CD4-positive, alpha-beta T cell (primary cell): ENCODE measurements at regions of chr7 and their contacts with region 1.

Region 1: DNA sequence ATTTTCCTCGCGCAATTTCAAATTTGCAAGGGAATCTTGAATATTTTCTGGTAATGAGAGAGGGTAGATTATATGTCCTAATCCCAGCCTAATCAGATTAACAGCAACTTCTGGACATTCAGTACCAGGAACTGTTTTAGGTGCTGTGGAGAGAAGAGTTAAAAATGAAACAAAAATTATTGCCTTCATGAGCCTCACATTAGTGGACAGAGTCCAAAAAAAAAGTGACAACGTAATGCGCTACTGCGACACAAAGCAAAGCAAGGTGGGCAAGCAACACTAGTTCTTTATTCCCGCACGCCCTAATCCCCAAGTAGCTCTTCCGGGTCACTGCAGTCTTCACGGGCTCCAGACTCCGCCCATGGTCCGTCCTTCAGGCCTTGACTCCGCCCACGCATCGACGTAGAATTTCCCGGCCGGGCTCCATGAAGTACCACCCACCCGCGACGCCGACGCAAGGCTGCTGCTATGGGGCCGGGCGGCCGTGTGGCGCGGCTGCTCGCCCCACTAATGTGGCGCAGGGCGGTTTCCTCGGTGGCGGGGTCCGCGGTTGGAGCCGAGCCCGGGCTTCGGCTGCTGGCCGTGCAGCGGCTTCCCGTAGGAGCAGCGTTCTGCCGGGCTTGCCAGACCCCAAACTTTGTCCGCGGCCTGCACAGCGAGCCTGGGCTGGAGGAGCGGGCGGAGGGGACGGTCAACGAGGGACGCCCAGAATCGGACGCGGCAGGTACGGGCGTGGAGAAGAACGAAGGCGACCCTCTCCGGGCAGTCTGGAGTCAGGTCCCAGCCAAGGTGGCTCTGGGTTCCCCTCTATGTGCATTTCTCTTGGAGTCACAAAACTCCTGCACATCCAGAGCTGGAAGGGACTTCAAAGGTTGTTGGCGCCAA is at the start of gene MALSU1:
- DNase-seq: peak; percentile 89 to 99 (median 96)
- ATAC-seq: peak; percentile 99
- H3K4me3 ChIP-seq: peak within 1 kb of the TSS; percentile 93
- H3K4me3 Mint-ChIP-seq: peak within 1 kb of the TSS; percentile 90
- H3K27ac ChIP-seq: peak within 1 kb of the TSS; percentile 74 to 78
- H3K27ac Mint-ChIP-seq: peak within 1 kb of the TSS; percentile 95
- H3K4me1 ChIP-seq: peaks cover 35% of the 10 kb centered on the region
- H3K4me1 Mint-ChIP-seq: peaks cover 55% of the 10 kb centered on the region
- H3K27me3 ChIP-seq: no peaks in the 10 kb centered on the region
- H3K27me3 Mint-ChIP-seq: no peaks in the 10 kb centered on the region
- CTCF ChIP-seq: no peak
- total RNA-seq, gene MALSU1: 50.5 to 50.9 TPM

Region 2: DNA sequence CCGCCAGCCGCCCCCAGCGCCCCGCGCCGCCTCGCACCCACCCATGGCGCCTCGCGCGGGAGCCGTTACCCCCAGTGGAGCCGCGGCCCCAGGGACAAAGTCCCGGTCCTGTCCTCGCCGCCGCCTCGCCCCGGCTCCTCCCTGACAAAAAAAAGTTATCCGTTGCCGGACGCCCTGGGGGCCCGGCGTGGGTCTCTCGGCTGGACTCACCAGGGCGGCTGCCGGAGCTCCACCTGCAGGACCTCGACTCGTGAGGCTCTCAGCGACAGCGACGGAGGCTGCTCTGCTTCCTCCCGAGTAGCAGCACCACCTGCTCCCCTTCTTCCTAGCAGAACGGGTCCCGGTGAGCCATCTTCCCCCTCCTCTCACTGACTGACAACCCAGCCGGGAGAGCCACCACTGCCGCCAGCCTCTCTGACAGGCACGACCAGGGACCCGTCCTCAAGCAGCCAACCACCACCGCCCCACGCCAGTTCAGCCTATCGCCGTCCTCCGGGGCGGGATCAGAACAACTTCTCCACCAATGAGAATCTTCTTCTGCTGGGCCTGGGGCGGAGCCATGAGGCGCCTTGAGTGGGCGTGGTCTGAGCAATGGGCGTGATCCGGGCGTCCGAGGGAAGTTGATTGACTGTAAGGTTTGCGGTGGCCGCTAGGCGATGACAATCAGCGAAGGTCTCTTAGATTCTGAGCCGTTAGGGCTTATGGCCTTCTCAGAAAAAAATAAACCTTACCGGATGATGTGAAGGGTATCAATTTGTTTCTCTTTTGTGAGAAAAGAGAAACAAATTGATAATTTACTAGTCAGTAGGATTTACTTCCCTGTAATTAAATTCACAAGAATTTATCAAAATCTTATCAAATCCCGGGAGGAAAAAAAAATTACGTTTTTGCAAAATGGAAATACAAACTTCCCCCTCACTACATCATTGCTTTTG is 285.1 kb before region 1 on chr7 and contains the start of gene HYCC1:
- CTCF ChIA-PET with region 1: no interaction called
- POLR2A ChIA-PET with region 1: interaction called, 4 read pairs
- intact Hi-C with region 1: loop called in 1 of 2 experiments (anchors 5 kb)
- DNase-seq: peak; percentile 97 to 99 (median 98)
- ATAC-seq: peak; percentile 96
- H3K4me3 ChIP-seq: peak within 1 kb of the TSS; percentile 87
- H3K4me3 Mint-ChIP-seq: peak within 1 kb of the TSS; percentile 99
- H3K27ac ChIP-seq: peak within 1 kb of the TSS; percentile 31 to 44
- H3K27ac Mint-ChIP-seq: peak within 1 kb of the TSS; percentile 83
- H3K4me1 ChIP-seq: peaks cover 19% of the 10 kb centered on the region
- H3K4me1 Mint-ChIP-seq: peaks cover 24% of the 10 kb centered on the region
- H3K27me3 ChIP-seq: no peaks in the 10 kb centered on the region
- H3K27me3 Mint-ChIP-seq: no peaks in the 10 kb centered on the region
- CTCF ChIP-seq: peak; percentile 65
- total RNA-seq, gene HYCC1: 12.4 to 13.1 TPM

Region 3: GRCh38 chr7:23072048-23072447 is 227.1 kb before region 1 on chr7:
- CTCF ChIA-PET with region 1: no interaction called
- POLR2A ChIA-PET with region 1: no interaction called
- intact Hi-C with region 1: no loop called
- DNase-seq: no peak
- ATAC-seq: no peak
- H3K4me3 ChIP-seq: no peak overlapping the region
- H3K4me3 Mint-ChIP-seq: no peak overlapping the region
- H3K27ac ChIP-seq: no peak overlapping the region
- H3K27ac Mint-ChIP-seq: no peak overlapping the region
- H3K4me1 ChIP-seq: no peaks in the 10 kb centered on the region
- H3K4me1 Mint-ChIP-seq: no peaks in the 10 kb centered on the region
- H3K27me3 ChIP-seq: no peaks in the 10 kb centered on the region
- H3K27me3 Mint-ChIP-seq: peaks cover 4% of the 10 kb centered on the region
- CTCF ChIP-seq: no peak

Region 4: DNA sequence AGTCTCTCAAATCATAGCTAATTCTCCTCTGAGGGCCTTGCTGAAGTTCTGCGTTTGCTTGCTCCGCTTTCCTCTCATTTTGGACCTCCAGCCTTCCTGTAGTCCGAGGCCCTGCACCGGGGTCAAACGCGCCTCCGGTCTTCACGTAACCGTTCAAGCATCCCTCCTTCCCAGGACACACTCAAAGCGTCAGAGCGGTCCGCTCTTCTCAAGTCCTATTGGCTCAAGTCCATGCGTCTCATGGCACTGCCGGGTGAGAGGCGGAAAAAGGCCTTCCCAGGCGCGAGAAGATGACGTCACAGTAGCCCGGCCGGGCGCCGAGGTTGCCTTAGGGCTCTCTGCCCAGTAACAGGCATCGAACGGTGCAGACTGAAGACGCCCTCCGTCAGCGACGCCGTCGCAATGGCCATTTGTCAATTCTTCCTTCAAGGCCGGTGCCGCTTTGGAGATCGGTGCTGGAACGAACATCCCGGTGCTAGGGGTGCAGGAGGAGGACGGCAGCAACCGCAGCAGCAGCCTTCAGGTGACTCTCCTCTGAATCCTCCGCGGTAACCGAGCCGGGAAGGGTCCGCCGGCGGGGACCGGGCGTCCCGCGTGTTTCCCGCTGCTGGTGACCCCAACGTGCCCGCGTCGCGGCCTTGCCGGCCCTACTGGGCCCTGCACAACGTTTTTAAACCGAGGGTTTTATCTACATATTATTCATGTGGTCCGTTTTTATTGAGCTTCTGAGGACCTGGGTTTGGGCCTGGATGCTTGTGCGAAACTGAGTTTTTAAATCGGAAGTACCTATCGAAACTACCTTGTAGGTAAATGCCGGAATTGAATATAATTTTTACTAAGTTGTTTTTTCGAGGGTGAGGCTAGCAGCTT is 117.2 kb before region 1 on chr7 and contains the start of gene NUP42:
- CTCF ChIA-PET with region 1: interaction called, 3 read pairs
- POLR2A ChIA-PET with region 1: interaction called, 4 read pairs
- intact Hi-C with region 1: loop called in 1 of 2 experiments (anchors 2 kb)
- DNase-seq: peak; percentile 87 to 98 (median 92)
- ATAC-seq: peak; percentile 91
- H3K4me3 ChIP-seq: peak within 1 kb of the TSS; percentile 88
- H3K4me3 Mint-ChIP-seq: peak within 1 kb of the TSS; percentile 96
- H3K27ac ChIP-seq: peak within 1 kb of the TSS; percentile 71 to 81
- H3K27ac Mint-ChIP-seq: peak within 1 kb of the TSS; percentile 97
- H3K4me1 ChIP-seq: peaks cover 18% of the 10 kb centered on the region
- H3K4me1 Mint-ChIP-seq: peaks cover 29% of the 10 kb centered on the region
- H3K27me3 ChIP-seq: no peaks in the 10 kb centered on the region
- H3K27me3 Mint-ChIP-seq: no peaks in the 10 kb centered on the region
- CTCF ChIP-seq: no peak
- total RNA-seq, gene NUP42: 19.4 to 20.1 TPM

Region 5: DNA sequence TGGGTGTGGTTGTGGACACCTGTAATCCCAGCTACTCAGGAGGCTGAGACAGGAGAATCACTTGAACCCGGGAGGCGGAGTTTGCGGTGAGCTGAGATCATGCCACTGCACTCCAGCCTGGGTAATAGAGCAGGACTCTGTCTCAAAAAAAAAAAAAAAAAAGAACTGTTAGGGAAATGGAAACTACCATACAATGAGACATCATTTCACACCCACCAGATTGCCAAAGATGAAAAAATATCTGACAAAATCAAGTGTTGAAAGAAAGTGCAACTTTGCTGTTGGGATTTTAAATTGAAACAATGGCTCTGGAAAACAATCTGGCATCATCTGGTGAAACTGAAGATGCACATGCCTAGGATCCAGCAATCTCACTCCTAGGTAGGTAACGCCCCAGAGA is 16.0 kb before region 1 on chr7:
- CTCF ChIA-PET with region 1: no interaction called
- POLR2A ChIA-PET with region 1: no interaction called
- intact Hi-C with region 1: no loop called
- DNase-seq: no peak
- ATAC-seq: no peak
- H3K4me3 ChIP-seq: no peak overlapping the region
- H3K4me3 Mint-ChIP-seq: no peak overlapping the region
- H3K27ac ChIP-seq: no peak overlapping the region
- H3K27ac Mint-ChIP-seq: no peak overlapping the region
- H3K4me1 ChIP-seq: peaks cover 4% of the 10 kb centered on the region
- H3K4me1 Mint-ChIP-seq: peaks cover 7% of the 10 kb centered on the region
- H3K27me3 ChIP-seq: no peaks in the 10 kb centered on the region
- H3K27me3 Mint-ChIP-seq: no peaks in the 10 kb centered on the region
- CTCF ChIP-seq: no peak

Region 6: GRCh38 chr7:23346316-23346715 is 47.2 kb after region 1 on chr7:
- CTCF ChIA-PET with region 1: no interaction called
- POLR2A ChIA-PET with region 1: interaction called, 13 read pairs
- intact Hi-C with region 1: no loop called
- DNase-seq: peak in 3 of 14 experiments; percentile 45 to 66 (median 51)
- ATAC-seq: peak; percentile 69
- H3K4me3 ChIP-seq: peak overlapping the region; percentile 48
- H3K4me3 Mint-ChIP-seq: peak overlapping the region; percentile 82
- H3K27ac ChIP-seq: no peak overlapping the region
- H3K27ac Mint-ChIP-seq: peak overlapping the region; percentile 73
- H3K4me1 ChIP-seq: peaks cover 2% of the 10 kb centered on the region
- H3K4me1 Mint-ChIP-seq: peaks cover 29% of the 10 kb centered on the region
- H3K27me3 ChIP-seq: no peaks in the 10 kb centered on the region
- H3K27me3 Mint-ChIP-seq: no peaks in the 10 kb centered on the region
- CTCF ChIP-seq: no peak

Region 7: GRCh38 chr7:23531794-23532489 is 232.8 kb after region 1 on chr7 and contains the start of gene TRA2A:
- CTCF ChIA-PET with region 1: no interaction called
- POLR2A ChIA-PET with region 1: no interaction called
- intact Hi-C with region 1: loop called (anchors 5 kb)
- DNase-seq: peak; percentile 92 to 99 (median 97)
- ATAC-seq: peak; percentile 91
- H3K4me3 ChIP-seq: peak within 1 kb of the TSS; percentile 97
- H3K4me3 Mint-ChIP-seq: peak within 1 kb of the TSS; percentile 94
- H3K27ac ChIP-seq: peak within 1 kb of the TSS; percentile 95 to 98
- H3K27ac Mint-ChIP-seq: peak within 1 kb of the TSS; percentile 97
- H3K4me1 ChIP-seq: peaks cover 29% of the 10 kb centered on the region
- H3K4me1 Mint-ChIP-seq: peaks cover 49% of the 10 kb centered on the region
- H3K27me3 ChIP-seq: no peaks in the 10 kb centered on the region
- H3K27me3 Mint-ChIP-seq: no peaks in the 10 kb centered on the region
- CTCF ChIP-seq: no peak
- total RNA-seq, gene TRA2A: 246 to 275 TPM

Region 8: DNA sequence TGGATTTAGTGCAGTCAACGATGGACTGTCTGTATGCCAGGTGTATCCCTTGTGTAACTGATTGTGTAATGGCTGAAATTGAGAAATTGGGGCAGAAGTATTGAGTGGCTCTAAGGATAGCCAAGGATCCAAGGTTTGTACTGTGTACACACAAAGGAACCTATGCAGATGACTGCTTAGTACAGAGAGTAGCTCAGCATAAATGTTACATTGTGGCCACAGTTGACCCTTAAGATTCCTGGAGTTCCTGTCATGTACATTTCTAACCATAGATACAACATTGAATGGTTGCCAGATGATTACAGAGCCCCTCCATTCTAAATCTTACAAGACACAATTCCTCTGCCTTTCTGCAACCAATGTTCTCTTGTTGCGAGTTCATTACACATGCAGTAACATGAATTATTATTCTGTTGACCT is 323.4 kb after region 1 on chr7:
- CTCF ChIA-PET with region 1: no interaction called
- POLR2A ChIA-PET with region 1: no interaction called
- intact Hi-C with region 1: no loop called
- DNase-seq: no peak
- ATAC-seq: no peak
- H3K4me3 ChIP-seq: no peak overlapping the region
- H3K4me3 Mint-ChIP-seq: no peak overlapping the region
- H3K27ac ChIP-seq: no peak overlapping the region
- H3K27ac Mint-ChIP-seq: no peak overlapping the region
- H3K4me1 ChIP-seq: no peaks in the 10 kb centered on the region
- H3K4me1 Mint-ChIP-seq: peaks cover 9% of the 10 kb centered on the region
- H3K27me3 ChIP-seq: no peaks in the 10 kb centered on the region
- H3K27me3 Mint-ChIP-seq: no peaks in the 10 kb centered on the region
- CTCF ChIP-seq: no peak

Region 9: DNA sequence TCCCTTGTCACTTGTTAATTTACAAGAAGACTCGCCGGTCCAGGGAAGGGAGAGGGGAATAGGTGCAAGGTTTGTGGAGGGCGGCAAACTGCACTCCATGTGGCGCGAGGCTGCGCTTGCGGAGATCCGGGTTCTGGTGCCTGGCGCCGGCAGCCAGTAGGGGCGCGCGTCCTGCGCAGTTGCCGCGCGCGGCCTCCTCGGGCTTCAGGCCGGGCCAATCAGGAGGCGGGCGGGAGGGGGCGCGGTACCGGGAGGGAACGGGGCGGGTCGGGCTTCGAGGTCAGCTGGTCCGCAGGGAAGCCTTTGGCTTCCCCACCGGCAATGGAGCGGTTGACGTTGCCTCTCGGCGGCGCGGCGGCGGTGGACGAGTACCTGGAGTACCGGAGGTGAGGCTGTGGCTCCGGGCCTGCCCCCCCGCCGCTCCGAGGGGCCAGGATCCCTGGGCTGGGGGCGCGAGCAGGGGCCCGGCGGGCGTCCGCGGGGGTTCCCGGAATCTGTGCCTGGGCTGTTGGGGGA is 380.8 kb after region 1 on chr7 and contains the start of gene FAM221A:
- CTCF ChIA-PET with region 1: no interaction called
- POLR2A ChIA-PET with region 1: no interaction called
- intact Hi-C with region 1: loop called in 1 of 2 experiments (anchors 10 kb)
- DNase-seq: peak; percentile 60 to 91 (median 77)
- ATAC-seq: peak; percentile 95
- H3K4me3 ChIP-seq: peak within 1 kb of the TSS; percentile 81
- H3K4me3 Mint-ChIP-seq: peak within 1 kb of the TSS; percentile 95
- H3K27ac ChIP-seq: peak within 1 kb of the TSS; percentile 1 to 56
- H3K27ac Mint-ChIP-seq: peak within 1 kb of the TSS; percentile 85
- H3K4me1 ChIP-seq: peaks cover 12% of the 10 kb centered on the region
- H3K4me1 Mint-ChIP-seq: peaks cover 14% of the 10 kb centered on the region
- H3K27me3 ChIP-seq: no peaks in the 10 kb centered on the region
- H3K27me3 Mint-ChIP-seq: peaks cover 7% of the 10 kb centered on the region
- CTCF ChIP-seq: peak; percentile 82
- total RNA-seq, gene FAM221A: 1.8 to 2.8 TPM

Region 10: DNA sequence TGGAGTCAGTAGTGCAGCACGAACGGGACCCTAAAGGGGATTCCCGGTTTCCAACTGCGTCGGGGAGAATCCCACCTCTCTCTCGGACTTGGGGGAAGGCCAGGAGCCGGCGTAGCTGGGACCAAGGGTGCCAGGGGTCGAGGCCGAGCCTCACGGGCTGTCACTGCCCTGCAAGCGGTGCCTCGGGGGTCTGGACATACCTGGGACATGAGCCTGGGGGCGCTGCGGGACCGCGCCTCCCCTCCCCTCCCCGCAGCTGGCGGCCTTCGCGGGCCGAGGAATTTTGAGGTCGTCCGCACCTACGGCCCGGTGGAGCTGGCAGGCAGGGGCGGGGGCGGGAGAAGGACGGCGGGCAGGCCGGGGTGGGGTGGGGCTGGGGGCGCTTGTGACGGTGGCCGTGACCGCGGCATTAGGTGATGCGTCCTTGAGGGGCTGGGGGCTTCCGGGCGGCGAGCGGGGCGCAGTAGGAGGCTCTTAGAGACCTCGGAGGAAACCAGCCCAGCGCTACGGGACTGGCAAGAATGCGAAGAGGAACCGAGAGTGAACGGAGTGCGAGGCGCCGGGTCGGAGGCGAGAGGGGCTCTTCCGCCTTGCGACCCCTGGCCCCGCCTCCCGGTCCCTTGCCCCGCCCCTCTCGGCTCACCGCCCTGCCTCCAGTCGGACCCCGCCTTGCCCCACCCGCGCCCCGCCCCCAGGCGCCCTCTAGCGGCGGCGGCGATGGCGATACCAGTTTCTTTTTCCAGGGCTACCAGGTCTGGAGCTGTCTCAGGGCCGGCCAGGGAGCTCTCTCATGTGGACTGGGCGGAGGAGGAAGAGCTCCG is 1880.9 kb after region 1 on chr7:
- CTCF ChIA-PET with region 1: no interaction called
- POLR2A ChIA-PET with region 1: no interaction called
- intact Hi-C with region 1: loop called in 1 of 2 experiments (anchors 10 kb)
- DNase-seq: peak; percentile 89 to 98 (median 95)
- ATAC-seq: peak; percentile 96
- H3K4me3 ChIP-seq: peak overlapping the region; percentile 77
- H3K4me3 Mint-ChIP-seq: peak overlapping the region; percentile 92
- H3K27ac ChIP-seq: peak overlapping the region; percentile 56 to 68
- H3K27ac Mint-ChIP-seq: peak overlapping the region; percentile 80
- H3K4me1 ChIP-seq: peaks cover 18% of the 10 kb centered on the region
- H3K4me1 Mint-ChIP-seq: peaks cover 24% of the 10 kb centered on the region
- H3K27me3 ChIP-seq: no peaks in the 10 kb centered on the region
- H3K27me3 Mint-ChIP-seq: no peaks in the 10 kb centered on the region
- CTCF ChIP-seq: peak; percentile 90